ENCODE measurements at regions of chr5 and their contacts with region 1.

Region 1: GRCh38 chr5:144203750-144204596 is 33.3 kb downstream of the KCTD16 start:
- DNase-seq: no peak

Region 2: GRCh38 chr5:145825751-145826180 is 1621.8 kb after region 1 on chr5:
- intact Hi-C with region 1: loop called in 1 of 2 experiments (anchors 5 kb)
- DNase-seq: no peak

Region 3: DNA sequence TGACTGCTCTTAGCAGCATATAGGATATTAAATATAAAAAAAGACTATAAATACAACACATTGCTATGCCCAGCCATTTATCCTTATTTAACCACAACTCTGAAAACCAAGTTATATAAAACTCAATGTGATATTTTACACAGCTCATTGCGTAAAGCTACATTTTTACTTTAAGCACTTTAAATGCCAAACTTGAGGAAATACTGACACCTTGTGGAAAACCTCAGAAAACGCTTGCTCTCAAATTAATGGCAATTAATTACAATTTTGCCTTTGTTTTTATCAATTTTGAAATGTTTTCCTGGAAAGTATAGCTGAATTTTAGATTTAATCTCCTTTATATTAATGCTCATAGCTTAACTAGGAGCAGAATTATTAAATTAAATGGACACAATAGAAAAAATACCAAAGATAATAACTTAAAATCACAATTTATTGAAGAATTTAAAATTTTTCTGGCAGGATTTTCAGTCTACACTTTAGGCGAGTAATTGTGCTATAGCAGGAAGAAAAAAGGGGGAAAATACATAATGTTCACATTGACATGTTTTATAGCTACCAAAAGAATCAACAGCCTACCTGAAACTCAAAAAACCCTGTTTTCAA is 1926.6 kb after region 1 on chr5:
- intact Hi-C with region 1: loop called in 1 of 2 experiments (anchors 10 kb)
- DNase-seq: no peak